Aorta (tissue), 5 donors: ENCODE measurements at regions of chr3 and their contacts with region 1.

Region 1: GRCh38 chr3:8593026-8593827 is 51.4 kb downstream of the SSUH2 start:
- DNase-seq: no peak
- ATAC-seq: peak; percentile 55
- H3K4me3 ChIP-seq: no peak overlapping the region
- H3K27ac ChIP-seq: peak overlapping the region in 1 of 2 donors; percentile 96
- H3K4me1 ChIP-seq: peaks cover 5 to 9% of the 10 kb centered on the region in 2 donors
- H3K27me3 ChIP-seq: no peaks in the 10 kb centered on the region

Region 2: GRCh38 chr3:8555113-8555661 is 38.0 kb before region 1 on chr3:
- intact Hi-C with region 1: loop called in 1 of 2 experiments (anchors 2 kb)
- DNase-seq: peak; percentile 72 to 76
- ATAC-seq: no peak
- H3K4me3 ChIP-seq: no peak overlapping the region
- H3K27ac ChIP-seq: peak overlapping the region; percentile 51 to 65
- H3K4me1 ChIP-seq: peaks cover 4 to 8% of the 10 kb centered on the region in 2 donors
- H3K27me3 ChIP-seq: no peaks in the 10 kb centered on the region

Region 3: GRCh38 chr3:8622873-8623691 is 29.9 kb after region 1 on chr3:
- intact Hi-C with region 1: no loop called
- DNase-seq: peak; percentile 73 to 89
- ATAC-seq: peak; percentile 87
- H3K4me3 ChIP-seq: no peak overlapping the region
- H3K27ac ChIP-seq: no peak overlapping the region
- H3K4me1 ChIP-seq: no peaks in the 10 kb centered on the region
- H3K27me3 ChIP-seq: no peaks in the 10 kb centered on the region